ENCODE measurements at regions of chr16 and their contacts with region 1.

Region 1: GRCh38 chr16:20348365-20349185 is 3.9 kb downstream of the UMOD start:
- DNase-seq: peak; percentile 39 to 93
- H3K4me3 ChIP-seq: no peak overlapping the region
- H3K27ac ChIP-seq: no peak overlapping the region
- H3K4me1 ChIP-seq: peaks cover 0 to 6% (median 1%) of the 10 kb centered on the region in 4 experiments; a peak in 3 of 7 replicates
- H3K27me3 ChIP-seq: no peaks in the 10 kb centered on the region
- CTCF ChIP-seq: peak; percentile 72 to 92 (median 83)
- EP300 ChIP-seq: no peak
- POLR2A ChIP-seq: no peak
- RAD21 ChIP-seq: peak; percentile 54 to 64

Region 2: GRCh38 chr16:20336955-20337354 is 11.6 kb before region 1 on chr16:
- CTCF ChIA-PET with region 1: interaction called, 47 read pairs
- POLR2A ChIA-PET with region 1: no interaction called
- DNase-seq: no peak
- H3K4me3 ChIP-seq: no peak overlapping the region
- H3K27ac ChIP-seq: no peak overlapping the region
- H3K4me1 ChIP-seq: peaks cover 0 to 2% (median 0%) of the 10 kb centered on the region in 4 experiments; a peak in 2 of 7 replicates
- H3K27me3 ChIP-seq: no peaks in the 10 kb centered on the region
- CTCF ChIP-seq: no peak
- EP300 ChIP-seq: no peak
- POLR2A ChIP-seq: no peak
- RAD21 ChIP-seq: no peak

Region 3: DNA sequence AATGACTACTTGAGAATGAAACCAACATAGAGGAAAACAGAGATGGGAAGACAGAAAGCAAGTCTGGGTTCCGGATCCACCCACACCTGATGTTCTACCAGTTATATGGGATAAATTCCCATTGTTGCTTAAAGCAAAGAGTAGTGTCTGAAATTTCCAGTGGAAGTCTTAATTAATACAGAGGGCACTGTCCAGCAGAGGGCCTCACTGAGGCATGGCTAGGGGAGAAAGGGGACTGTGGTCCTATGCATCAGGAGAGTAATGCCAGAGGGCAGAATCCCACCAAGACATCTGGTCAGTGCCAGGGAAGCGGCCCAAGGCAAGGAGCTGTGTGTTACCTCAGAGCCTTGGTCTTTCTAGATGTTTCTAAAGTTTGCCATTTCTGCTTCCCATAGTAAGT is 11.4 kb after region 1 on chr16:
- CTCF ChIA-PET with region 1: interaction called, 20 read pairs
- POLR2A ChIA-PET with region 1: no interaction called
- DNase-seq: peak in 1 of 2 experiments; percentile 59
- H3K4me3 ChIP-seq: no peak overlapping the region
- H3K27ac ChIP-seq: no peak overlapping the region
- H3K4me1 ChIP-seq: no peaks in the 10 kb centered on the region
- H3K27me3 ChIP-seq: no peaks in the 10 kb centered on the region
- CTCF ChIP-seq: peak; percentile 57 to 71 (median 66)
- EP300 ChIP-seq: no peak
- POLR2A ChIP-seq: no peak
- RAD21 ChIP-seq: peak; percentile 53 to 64

Region 4: GRCh38 chr16:20372701-20373100 is 24.1 kb after region 1 on chr16:
- CTCF ChIA-PET with region 1: interaction called, 14 read pairs
- POLR2A ChIA-PET with region 1: no interaction called
- DNase-seq: no peak
- H3K4me3 ChIP-seq: no peak overlapping the region
- H3K27ac ChIP-seq: no peak overlapping the region
- H3K4me1 ChIP-seq: no peaks in the 10 kb centered on the region
- H3K27me3 ChIP-seq: no peaks in the 10 kb centered on the region; a peak in 1 of 7 replicates
- CTCF ChIP-seq: no peak
- EP300 ChIP-seq: no peak
- POLR2A ChIP-seq: no peak
- RAD21 ChIP-seq: no peak

Region 5: DNA sequence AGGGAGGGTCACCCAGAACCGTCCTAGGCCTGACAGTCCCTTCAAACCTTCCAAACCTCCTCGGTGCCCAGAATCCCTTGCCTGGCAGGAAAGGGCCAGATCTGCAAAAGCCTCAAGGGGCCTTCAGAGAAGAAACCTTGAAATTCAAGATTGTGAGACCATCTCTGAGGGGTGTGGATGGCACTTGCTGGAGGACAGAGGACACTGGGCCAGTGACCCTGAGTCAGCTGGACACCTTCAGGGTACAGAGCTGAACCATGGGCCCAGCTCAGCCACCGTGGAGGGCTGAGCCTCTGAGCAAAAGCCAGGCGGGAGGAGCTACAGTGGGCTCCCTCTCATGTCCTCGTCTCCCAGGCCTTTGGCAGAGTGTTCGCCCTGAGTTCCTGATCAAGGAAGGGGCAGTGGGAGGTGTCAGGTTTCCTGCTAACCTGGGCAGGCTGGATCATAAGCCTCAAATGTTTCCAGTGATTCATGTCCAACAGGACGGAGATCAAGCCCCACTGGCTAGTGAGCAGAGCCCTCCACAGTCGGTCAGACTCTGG is 53.0 kb after region 1 on chr16:
- CTCF ChIA-PET with region 1: no interaction called
- POLR2A ChIA-PET with region 1: no interaction called
- DNase-seq: no peak
- H3K4me3 ChIP-seq: no peak overlapping the region
- H3K27ac ChIP-seq: no peak overlapping the region
- H3K4me1 ChIP-seq: peaks cover 0 to 1% (median 0%) of the 10 kb centered on the region in 4 experiments; a peak in 1 of 7 replicates
- H3K27me3 ChIP-seq: no peaks in the 10 kb centered on the region
- CTCF ChIP-seq: no peak
- EP300 ChIP-seq: no peak
- POLR2A ChIP-seq: no peak
- RAD21 ChIP-seq: no peak

Measured in H1 (cell line).